GM12878 (cell line): ENCODE measurements at regions of chr5 and their contacts with region 1.

Region 1: GRCh38 chr5:103918668-103919367 is 356.2 kb upstream of the NUDT12 start:
- DNase-seq: peak; percentile 3
- ATAC-seq: peak; percentile 67
- H3K4me3 ChIP-seq: no peak overlapping the region
- H3K27ac ChIP-seq: no peak overlapping the region
- H3K4me1 ChIP-seq: no peaks in the 10 kb centered on the region
- H3K27me3 ChIP-seq: no peaks in the 10 kb centered on the region
- CTCF ChIP-seq: no peak
- EP300 ChIP-seq: no peak
- POLR2A ChIP-seq: no peak
- RAD21 ChIP-seq: no peak

Region 2: DNA sequence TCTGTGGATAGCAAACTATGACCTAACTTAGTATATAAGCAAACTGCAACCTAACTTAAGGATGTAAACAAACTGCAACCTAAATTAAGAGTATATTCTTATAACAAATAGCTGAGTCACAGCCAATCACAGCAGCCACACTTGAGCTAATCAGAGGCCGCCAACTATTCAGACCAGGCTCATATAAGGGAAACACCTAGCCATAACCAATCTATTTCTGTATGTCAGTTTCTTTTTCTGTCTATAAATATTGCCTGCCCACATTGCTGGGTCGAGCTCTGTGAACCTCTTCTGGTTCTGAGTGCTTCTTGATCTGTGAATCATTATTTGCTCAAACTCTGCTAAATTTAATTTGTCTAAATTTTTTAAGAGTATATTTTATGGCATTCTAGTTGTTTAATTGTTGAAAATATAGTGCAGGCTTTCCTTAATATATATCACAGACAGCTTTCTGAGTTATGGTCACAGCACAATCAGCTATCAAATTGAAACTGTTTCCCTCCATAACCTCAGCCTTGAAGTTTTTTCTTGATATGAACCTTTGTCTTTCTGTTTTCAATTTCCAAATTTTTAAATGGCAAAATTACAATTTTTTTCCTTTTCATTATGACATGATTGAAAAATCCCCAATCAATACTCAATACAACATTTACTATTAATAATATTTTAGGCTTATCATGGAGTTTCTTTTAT is 29.2 kb before region 1 on chr5:
- CTCF ChIA-PET with region 1: interaction called, 7 read pairs
- POLR2A ChIA-PET with region 1: interaction called, 4 read pairs
- RAD21 ChIA-PET with region 1: interaction called, 53 read pairs
- SMC1A ChIA-PET with region 1: interaction called, 63 read pairs
- in situ Hi-C with region 1: no loop called
- intact Hi-C with region 1: no loop called
- DNase-seq: peak; percentile 9
- ATAC-seq: peak; percentile 98
- H3K4me3 ChIP-seq: no peak overlapping the region
- H3K27ac ChIP-seq: no peak overlapping the region
- H3K4me1 ChIP-seq: no peaks in the 10 kb centered on the region
- H3K27me3 ChIP-seq: no peaks in the 10 kb centered on the region
- CTCF ChIP-seq: no peak
- EP300 ChIP-seq: no peak
- POLR2A ChIP-seq: no peak
- RAD21 ChIP-seq: no peak

Region 3: GRCh38 chr5:103894882-103895281 is 23.9 kb before region 1 on chr5:
- CTCF ChIA-PET with region 1: interaction called, 7 read pairs
- POLR2A ChIA-PET with region 1: interaction called, 4 read pairs
- RAD21 ChIA-PET with region 1: interaction called, 53 read pairs
- SMC1A ChIA-PET with region 1: interaction called, 63 read pairs
- in situ Hi-C with region 1: no loop called
- intact Hi-C with region 1: no loop called
- DNase-seq: no peak
- ATAC-seq: no peak
- H3K4me3 ChIP-seq: no peak overlapping the region
- H3K27ac ChIP-seq: no peak overlapping the region
- H3K4me1 ChIP-seq: no peaks in the 10 kb centered on the region
- H3K27me3 ChIP-seq: no peaks in the 10 kb centered on the region
- CTCF ChIP-seq: no peak
- EP300 ChIP-seq: no peak
- POLR2A ChIP-seq: no peak
- RAD21 ChIP-seq: no peak

Region 4: GRCh38 chr5:103929338-103930003 is 10.7 kb after region 1 on chr5:
- CTCF ChIA-PET with region 1: interaction called, 15 read pairs
- POLR2A ChIA-PET with region 1: interaction called, 23 read pairs
- RAD21 ChIA-PET with region 1: interaction called, 59 read pairs
- SMC1A ChIA-PET with region 1: interaction called, 82 read pairs
- in situ Hi-C with region 1: no loop called
- intact Hi-C with region 1: no loop called
- DNase-seq: no peak
- ATAC-seq: peak; percentile 97
- H3K4me3 ChIP-seq: no peak overlapping the region
- H3K27ac ChIP-seq: no peak overlapping the region
- H3K4me1 ChIP-seq: no peaks in the 10 kb centered on the region
- H3K27me3 ChIP-seq: no peaks in the 10 kb centered on the region
- CTCF ChIP-seq: no peak
- EP300 ChIP-seq: no peak
- POLR2A ChIP-seq: no peak
- RAD21 ChIP-seq: no peak

Region 5: GRCh38 chr5:103938146-103938695 is 19.4 kb after region 1 on chr5:
- CTCF ChIA-PET with region 1: interaction called, 3 read pairs
- POLR2A ChIA-PET with region 1: interaction called, 3 read pairs
- RAD21 ChIA-PET with region 1: interaction called, 4 read pairs
- SMC1A ChIA-PET with region 1: interaction called, 16 read pairs
- in situ Hi-C with region 1: no loop called
- intact Hi-C with region 1: no loop called
- DNase-seq: no peak
- ATAC-seq: no peak
- H3K4me3 ChIP-seq: no peak overlapping the region
- H3K27ac ChIP-seq: no peak overlapping the region
- H3K4me1 ChIP-seq: no peaks in the 10 kb centered on the region
- H3K27me3 ChIP-seq: no peaks in the 10 kb centered on the region
- CTCF ChIP-seq: no peak
- EP300 ChIP-seq: no peak
- POLR2A ChIP-seq: no peak
- RAD21 ChIP-seq: no peak